ENCODE measurements at regions of chr11 and their contacts with region 1.

Region 1: DNA sequence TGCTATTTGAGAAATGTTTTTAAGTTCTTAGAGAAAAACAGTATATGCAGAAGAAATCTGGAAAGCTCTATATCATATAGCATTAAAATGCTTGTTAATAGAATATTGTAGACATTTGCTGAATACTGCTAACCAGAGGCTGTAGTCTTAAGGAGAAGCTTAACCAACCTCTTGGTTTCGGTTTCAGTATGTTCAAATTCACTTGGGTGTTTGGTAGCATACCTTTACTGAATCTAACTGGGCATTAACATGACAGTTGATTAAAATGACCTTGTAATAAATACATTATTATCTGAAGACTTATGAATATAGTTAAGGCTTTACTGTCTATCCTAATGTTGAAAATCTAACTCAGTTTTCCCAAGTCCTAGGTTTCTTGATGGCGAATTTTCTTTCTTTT is 5.4 kb downstream of the PCF11 start:
- DNase-seq: no peak
- ATAC-seq: peak; percentile 67
- H3K4me3 ChIP-seq: peak overlapping the region; percentile 98
- H3K27ac ChIP-seq: no peak overlapping the region
- H3K4me1 ChIP-seq: no peaks in the 10 kb centered on the region; the same call in none of the 2 replicates
- H3K27me3 ChIP-seq: no peaks in the 10 kb centered on the region
- CTCF ChIP-seq: no peak
- EP300 ChIP-seq: no peak
- POLR2A ChIP-seq: no peak
- RAD21 ChIP-seq: no peak

Region 2: GRCh38 chr11:82631722-82632630 is 530.4 kb before region 1 on chr11:
- CTCF ChIA-PET with region 1: no interaction called
- POLR2A ChIA-PET with region 1: no interaction called
- RAD21 ChIA-PET with region 1: no interaction called
- SMC1A ChIA-PET with region 1: no interaction called
- in situ Hi-C with region 1: no loop called
- intact Hi-C with region 1: no loop called
- DNase-seq: peak; percentile 27
- ATAC-seq: peak; percentile 96
- H3K4me3 ChIP-seq: no peak overlapping the region
- H3K27ac ChIP-seq: peak overlapping the region; percentile 18; the same call in 1 of the 2 replicates
- H3K4me1 ChIP-seq: no peaks in the 10 kb centered on the region
- H3K27me3 ChIP-seq: no peaks in the 10 kb centered on the region; a peak in 2 of 4 replicates
- CTCF ChIP-seq: no peak
- EP300 ChIP-seq: no peak
- POLR2A ChIP-seq: no peak
- RAD21 ChIP-seq: no peak

Region 3: DNA sequence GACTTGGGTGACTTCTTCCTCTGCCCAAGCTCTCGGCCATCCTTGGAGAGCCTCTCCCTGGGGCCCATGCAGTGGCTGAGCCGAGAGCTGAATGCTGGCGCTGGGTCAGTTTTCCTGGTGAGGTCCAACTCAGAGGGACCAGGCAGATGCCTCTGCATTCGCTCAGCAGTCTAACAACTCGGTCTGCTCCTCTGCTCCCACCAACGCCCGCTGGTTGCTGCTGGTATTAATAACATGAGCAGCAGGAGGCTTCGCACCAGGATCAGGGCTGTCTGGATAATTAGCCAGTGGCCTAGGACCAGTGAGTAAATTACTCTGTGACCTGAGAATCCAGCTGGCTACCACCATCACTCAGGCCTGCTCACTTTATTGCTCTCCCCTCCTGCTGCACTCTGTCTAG is 351.0 kb before region 1 on chr11:
- CTCF ChIA-PET with region 1: no interaction called
- POLR2A ChIA-PET with region 1: no interaction called
- RAD21 ChIA-PET with region 1: no interaction called
- SMC1A ChIA-PET with region 1: no interaction called
- in situ Hi-C with region 1: no loop called
- intact Hi-C with region 1: no loop called
- DNase-seq: no peak
- ATAC-seq: no peak
- H3K4me3 ChIP-seq: no peak overlapping the region
- H3K27ac ChIP-seq: no peak overlapping the region
- H3K4me1 ChIP-seq: no peaks in the 10 kb centered on the region
- H3K27me3 ChIP-seq: no peaks in the 10 kb centered on the region; a peak in 2 of 4 replicates
- CTCF ChIP-seq: no peak
- EP300 ChIP-seq: no peak
- POLR2A ChIP-seq: no peak
- RAD21 ChIP-seq: no peak

Region 4: GRCh38 chr11:83174008-83174407 is 11.6 kb after region 1 on chr11:
- CTCF ChIA-PET with region 1: interaction called, 17 read pairs
- POLR2A ChIA-PET with region 1: interaction called, 7 read pairs
- RAD21 ChIA-PET with region 1: interaction called, 4 read pairs
- SMC1A ChIA-PET with region 1: interaction called, 25 read pairs
- in situ Hi-C with region 1: no loop called
- intact Hi-C with region 1: no loop called
- DNase-seq: no peak
- ATAC-seq: peak; percentile 21
- H3K4me3 ChIP-seq: no peak overlapping the region
- H3K27ac ChIP-seq: no peak overlapping the region
- H3K4me1 ChIP-seq: peaks cover 10% of the 10 kb centered on the region
- H3K27me3 ChIP-seq: no peaks in the 10 kb centered on the region
- CTCF ChIP-seq: no peak
- EP300 ChIP-seq: no peak
- POLR2A ChIP-seq: no peak
- RAD21 ChIP-seq: no peak

Region 5: DNA sequence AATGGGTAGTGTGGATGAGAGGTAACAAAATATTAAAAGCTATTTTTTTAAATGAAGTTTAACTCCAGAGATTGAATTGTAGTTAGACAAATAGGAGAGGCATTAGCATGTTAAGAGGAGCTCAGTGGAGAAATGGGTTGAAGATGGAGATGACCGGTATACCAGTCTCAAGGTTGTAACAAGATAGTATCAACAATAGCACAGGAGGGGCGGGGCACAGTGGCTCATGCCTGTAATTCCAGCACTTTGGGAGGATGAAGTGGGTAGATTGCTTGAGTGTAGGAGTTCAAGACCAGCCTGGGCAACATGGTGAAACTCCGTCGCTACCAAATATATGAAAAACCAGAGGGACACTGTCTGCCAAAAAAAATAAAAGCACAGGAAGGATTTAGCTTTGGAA is 25.1 kb after region 1 on chr11:
- CTCF ChIA-PET with region 1: no interaction called
- POLR2A ChIA-PET with region 1: interaction called, 3 read pairs
- RAD21 ChIA-PET with region 1: no interaction called
- SMC1A ChIA-PET with region 1: interaction called, 10 read pairs
- in situ Hi-C with region 1: no loop called
- intact Hi-C with region 1: no loop called
- DNase-seq: no peak
- ATAC-seq: peak; percentile 27; the same call in 2 of the 3 replicates
- H3K4me3 ChIP-seq: no peak overlapping the region
- H3K27ac ChIP-seq: no peak overlapping the region
- H3K4me1 ChIP-seq: no peaks in the 10 kb centered on the region
- H3K27me3 ChIP-seq: no peaks in the 10 kb centered on the region
- CTCF ChIP-seq: no peak
- EP300 ChIP-seq: no peak
- POLR2A ChIP-seq: no peak
- RAD21 ChIP-seq: no peak